OCI-LY7 (cell line): ENCODE measurements at regions of chr20 and their contacts with region 1.

Region 1: GRCh38 chr20:35146920-35147574 is at the start of gene EDEM2:
- DNase-seq: peak; percentile 95
- H3K4me3 ChIP-seq: peak within 1 kb of the TSS; percentile 74
- H3K27ac ChIP-seq: peak within 1 kb of the TSS; percentile 23
- H3K4me1 ChIP-seq: peaks cover 23% of the 10 kb centered on the region
- CTCF ChIP-seq: 0 out of 2 replicates have a peak, but pooled peaks have one; percentile 30
- total RNA-seq, gene EDEM2: 19.1 and 19.7 TPM in 2 replicates

Region 2: GRCh38 chr20:34834459-34834893 is 312.6 kb before region 1 on chr20:
- CTCF ChIA-PET with region 1: no interaction called
- POLR2A ChIA-PET with region 1: no interaction called
- intact Hi-C with region 1: loop called (anchors 2 kb)
- DNase-seq: peak; percentile 67
- H3K4me3 ChIP-seq: peak overlapping the region; percentile 10
- H3K27ac ChIP-seq: no peak overlapping the region
- H3K4me1 ChIP-seq: no peaks in the 10 kb centered on the region
- CTCF ChIP-seq: peak; percentile 78

Region 3: DNA sequence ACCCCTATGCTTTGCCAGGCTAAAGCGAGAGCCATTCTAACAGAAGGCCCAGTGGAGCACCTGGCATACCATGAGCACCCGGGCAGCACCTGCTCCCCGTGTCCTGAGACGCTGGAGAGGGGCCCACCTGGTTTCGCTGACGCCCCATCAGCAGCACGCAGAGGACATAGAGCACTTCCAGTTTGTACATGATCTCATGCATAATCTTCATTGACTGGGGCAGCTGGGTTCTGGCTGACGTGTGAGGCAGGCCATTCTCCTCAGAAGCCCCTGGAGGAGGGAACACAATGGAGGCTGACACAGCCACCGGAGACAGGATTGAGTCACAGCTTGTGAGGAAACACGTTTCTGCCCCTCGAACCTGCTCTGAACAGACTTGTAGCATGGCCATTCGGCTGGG is 126.0 kb before region 1 on chr20:
- CTCF ChIA-PET with region 1: no interaction called
- POLR2A ChIA-PET with region 1: no interaction called
- intact Hi-C with region 1: no loop called
- DNase-seq: no peak
- H3K4me3 ChIP-seq: no peak overlapping the region
- H3K27ac ChIP-seq: no peak overlapping the region
- H3K4me1 ChIP-seq: no peaks in the 10 kb centered on the region
- CTCF ChIP-seq: no peak

Region 4: GRCh38 chr20:35092524-35093266 is 54.4 kb before region 1 on chr20 and contains the start of gene TRPC4AP:
- CTCF ChIA-PET with region 1: interaction called, 4 read pairs
- POLR2A ChIA-PET with region 1: interaction called, 7 read pairs
- intact Hi-C with region 1: loop called (anchors 1 kb)
- DNase-seq: peak; percentile 92
- H3K4me3 ChIP-seq: peak within 1 kb of the TSS; percentile 100
- H3K27ac ChIP-seq: peak within 1 kb of the TSS; percentile 20
- H3K4me1 ChIP-seq: peaks cover 18% of the 10 kb centered on the region
- CTCF ChIP-seq: peak; percentile 88
- total RNA-seq, gene TRPC4AP: 25.5 and 31.9 TPM in 2 replicates

Region 5: DNA sequence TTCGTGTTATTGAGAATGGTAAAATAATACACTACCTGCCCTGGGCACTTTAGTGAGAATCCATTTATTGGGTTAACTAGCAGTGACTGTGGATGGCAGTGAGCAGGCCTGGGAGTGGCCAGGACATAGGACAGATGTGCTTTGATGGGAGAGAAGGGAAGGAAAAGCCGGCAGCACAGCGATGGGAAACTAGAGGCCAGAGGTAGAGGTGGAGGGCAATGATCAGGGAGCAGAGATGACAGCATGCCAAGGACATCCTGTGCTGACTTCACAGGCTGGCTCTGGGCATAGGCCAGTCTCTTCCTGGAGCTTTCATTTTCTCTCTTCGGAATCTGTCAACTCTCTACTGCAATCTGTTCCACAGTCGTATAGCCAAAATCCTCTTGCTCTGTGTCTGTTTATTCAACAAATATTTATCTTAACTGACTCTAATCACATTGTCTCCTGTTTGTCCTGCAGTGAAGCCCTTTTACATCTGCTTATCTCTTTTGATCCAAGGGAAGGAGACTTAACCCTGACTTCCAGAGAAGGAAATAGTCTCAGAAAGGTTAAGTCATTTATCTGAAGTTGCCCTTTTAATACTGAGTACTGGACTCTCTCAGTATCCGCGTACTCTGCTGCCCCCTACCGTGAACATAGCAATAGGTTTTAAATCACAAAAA is 61.0 kb after region 1 on chr20:
- CTCF ChIA-PET with region 1: no interaction called
- POLR2A ChIA-PET with region 1: interaction called, 3 read pairs
- intact Hi-C with region 1: loop called (anchors 1 kb)
- DNase-seq: peak; percentile 76
- H3K4me3 ChIP-seq: no peak overlapping the region
- H3K27ac ChIP-seq: no peak overlapping the region
- H3K4me1 ChIP-seq: no peaks in the 10 kb centered on the region
- CTCF ChIP-seq: peak; percentile 89

Region 6: DNA sequence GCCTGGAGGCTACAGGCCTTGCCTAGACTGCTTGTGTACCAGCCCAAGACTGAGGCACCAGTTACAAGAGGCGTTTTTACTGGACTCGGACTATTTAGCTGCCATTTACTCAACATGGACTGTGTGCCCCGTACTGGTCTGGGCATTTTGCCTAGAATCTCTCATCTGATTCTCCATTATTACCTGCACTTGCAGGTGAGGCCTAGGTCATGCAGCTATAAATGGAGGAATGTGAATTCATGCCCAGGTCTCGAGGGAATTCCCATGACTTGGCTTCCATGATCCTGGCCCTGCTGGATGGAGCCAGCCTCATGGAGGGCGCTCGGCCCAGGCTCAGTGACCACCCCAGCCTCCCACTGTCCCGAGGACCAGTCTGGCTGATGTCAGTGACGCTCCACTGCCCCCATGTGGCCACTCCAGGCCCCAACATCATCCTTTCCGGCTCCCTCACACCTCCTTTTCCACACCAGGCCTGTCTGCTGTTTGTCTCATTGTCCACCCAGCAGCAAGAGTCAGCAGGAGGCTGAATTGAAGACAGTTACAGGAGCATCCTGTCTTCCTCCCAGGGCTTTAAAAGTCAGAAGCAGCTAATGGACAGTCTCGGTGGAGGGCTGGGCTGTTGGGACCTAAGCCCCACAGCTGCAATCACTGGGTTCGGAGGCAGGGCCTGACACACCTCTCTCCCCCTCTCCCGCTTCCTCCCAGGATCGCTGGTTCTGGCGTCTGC is 122.2 kb after region 1 on chr20:
- CTCF ChIA-PET with region 1: interaction called, 4 read pairs
- POLR2A ChIA-PET with region 1: no interaction called
- intact Hi-C with region 1: loop called (anchors 2 kb)
- DNase-seq: peak; percentile 57
- H3K4me3 ChIP-seq: no peak overlapping the region
- H3K27ac ChIP-seq: no peak overlapping the region
- H3K4me1 ChIP-seq: no peaks in the 10 kb centered on the region
- CTCF ChIP-seq: peak; percentile 87

Region 7: GRCh38 chr20:35410613-35411012 is 263.6 kb after region 1 on chr20:
- CTCF ChIA-PET with region 1: no interaction called
- POLR2A ChIA-PET with region 1: interaction called, 3 read pairs
- intact Hi-C with region 1: loop called (anchors 10 kb)
- DNase-seq: no peak
- H3K4me3 ChIP-seq: peak overlapping the region; percentile 83
- H3K27ac ChIP-seq: no peak overlapping the region
- H3K4me1 ChIP-seq: peaks cover 11% of the 10 kb centered on the region
- CTCF ChIP-seq: no peak